Spleen (tissue), 13 donors: ENCODE measurements at regions of chr20 and their contacts with region 1.

Region 1: DNA sequence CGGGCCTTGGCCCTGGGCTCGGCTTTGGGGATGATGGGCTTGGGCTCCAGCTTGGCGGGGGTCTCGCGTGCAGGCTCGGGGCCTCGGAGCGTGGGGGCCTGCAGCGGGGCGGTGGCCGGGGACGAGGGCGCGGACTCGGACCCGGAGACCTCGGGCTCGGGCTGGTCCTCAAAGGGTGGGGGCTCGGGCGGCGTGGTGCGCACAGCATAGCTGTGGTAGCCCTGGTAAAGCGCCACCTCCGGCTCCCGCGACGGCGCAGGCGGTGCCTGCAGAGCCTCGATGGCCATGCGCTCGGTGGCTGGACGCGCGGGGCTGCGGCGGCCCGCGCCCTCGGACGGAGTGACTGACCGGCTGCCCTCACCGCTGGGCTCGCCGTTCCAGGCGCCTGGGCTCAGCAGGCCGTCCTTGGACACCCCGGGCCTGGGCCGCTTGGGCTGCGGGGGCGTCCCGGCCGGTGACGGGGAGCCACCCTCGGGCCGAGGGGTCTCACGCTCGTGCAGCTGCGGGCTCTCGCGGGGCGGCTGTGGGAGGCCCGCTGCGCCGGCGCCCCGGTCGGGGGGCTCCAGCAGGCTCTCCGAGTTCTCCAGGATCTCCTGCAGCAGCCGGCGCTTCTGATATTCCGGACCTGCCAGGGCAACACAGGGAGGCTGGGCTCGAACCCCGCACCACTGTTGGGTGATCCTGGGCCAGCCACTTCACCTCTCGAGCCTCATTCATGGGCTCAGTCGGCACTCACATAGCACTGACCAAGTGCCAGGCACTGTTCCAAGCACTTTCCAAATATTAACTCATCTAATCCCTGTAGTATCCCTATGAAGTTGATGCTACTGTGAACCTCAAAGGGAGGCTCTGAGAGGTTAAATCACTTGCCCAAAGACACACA is 71.0 kb downstream of the JPH2 start:
- DNase-seq: peak; percentile 57
- H3K4me3 ChIP-seq: no peak overlapping the region
- H3K27ac ChIP-seq: no peak overlapping the region
- H3K4me1 ChIP-seq: peaks cover 0 to 11% (median 5%) of the 10 kb centered on the region in 6 donors
- H3K27me3 ChIP-seq: peaks cover 0 to 39% (median 17%) of the 10 kb centered on the region in 7 donors
- CTCF ChIP-seq: no peak
- POLR2A ChIP-seq: no peak

Region 2: GRCh38 chr20:44056010-44056698 is 59.8 kb before region 1 on chr20:
- intact Hi-C with region 1: no loop called
- DNase-seq: no peak
- H3K4me3 ChIP-seq: no peak overlapping the region
- H3K27ac ChIP-seq: no peak overlapping the region
- H3K4me1 ChIP-seq: no peaks in the 10 kb centered on the region
- H3K27me3 ChIP-seq: peaks cover 0 to 4% (median 0%) of the 10 kb centered on the region in 7 donors
- CTCF ChIP-seq: peak in 10 of 11 experiments; percentile 12 to 69 (median 36)
- POLR2A ChIP-seq: no peak

Region 3: DNA sequence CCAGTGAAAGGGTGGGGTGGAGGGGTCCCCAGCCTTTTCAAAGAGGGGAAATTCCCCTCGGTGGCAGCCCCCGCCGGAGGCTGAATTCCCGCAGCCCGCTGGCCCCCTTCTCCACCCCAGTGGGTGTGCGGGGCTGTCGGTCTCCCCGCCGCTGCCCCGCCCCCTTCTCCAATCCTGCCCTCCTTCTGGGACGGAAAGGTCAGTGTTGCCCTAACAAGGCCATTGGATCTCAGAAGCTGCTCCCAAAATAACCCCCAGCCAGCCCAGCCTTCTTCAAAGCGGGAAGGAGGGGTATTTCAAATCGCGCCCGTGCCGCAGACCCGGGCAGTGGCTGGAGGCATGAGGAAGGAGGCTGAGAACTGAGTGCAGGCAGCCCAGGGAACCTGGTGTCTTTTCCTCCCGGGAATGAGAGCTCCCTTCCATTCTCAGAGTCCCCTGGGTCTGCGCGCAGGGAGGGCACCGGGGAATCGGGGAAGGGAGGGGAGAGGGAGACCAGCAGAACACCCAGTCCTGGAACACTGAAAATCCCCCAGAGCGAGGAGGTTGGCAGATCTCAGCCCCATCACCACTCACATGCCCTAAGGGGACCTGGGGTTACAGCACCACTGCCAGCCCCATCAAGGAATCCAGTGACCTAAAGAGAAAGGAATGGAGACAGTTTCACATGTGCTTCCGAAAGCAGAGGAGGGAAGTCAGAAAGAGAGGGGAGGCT is 71.2 kb after region 1 on chr20 and contains the start of gene JPH2:
- intact Hi-C with region 1: loop called (anchors 5 kb)
- DNase-seq: no peak
- H3K4me3 ChIP-seq: peak within 1 kb of the TSS in 6 of 8 donors; percentile 4 to 59 (median 25)
- H3K27ac ChIP-seq: peak within 1 kb of the TSS in 5 of 8 donors; percentile 26 to 58 (median 49)
- H3K4me1 ChIP-seq: peaks cover 5 to 40% (median 17%) of the 10 kb centered on the region in 6 donors
- H3K27me3 ChIP-seq: peaks cover 0 to 50% (median 26%) of the 10 kb centered on the region in 7 donors
- CTCF ChIP-seq: no peak
- POLR2A ChIP-seq: no peak
- total RNA-seq, gene JPH2: 1.0 to 4.4 (median 1.3) TPM

Region 4: GRCh38 chr20:44460795-44461141 is 344.8 kb after region 1 on chr20:
- intact Hi-C with region 1: no loop called
- DNase-seq: no peak
- H3K4me3 ChIP-seq: no peak overlapping the region
- H3K27ac ChIP-seq: no peak overlapping the region
- H3K4me1 ChIP-seq: peaks cover 0 to under 1% (median 0%) of the 10 kb centered on the region in 6 donors
- H3K27me3 ChIP-seq: no peaks in the 10 kb centered on the region
- CTCF ChIP-seq: peak in 2 of 11 experiments; percentile 7 to 16
- POLR2A ChIP-seq: no peak